Right lobe of liver (tissue), 6 donors: ENCODE measurements at regions of chr6 and their contacts with region 1.

Region 1: DNA sequence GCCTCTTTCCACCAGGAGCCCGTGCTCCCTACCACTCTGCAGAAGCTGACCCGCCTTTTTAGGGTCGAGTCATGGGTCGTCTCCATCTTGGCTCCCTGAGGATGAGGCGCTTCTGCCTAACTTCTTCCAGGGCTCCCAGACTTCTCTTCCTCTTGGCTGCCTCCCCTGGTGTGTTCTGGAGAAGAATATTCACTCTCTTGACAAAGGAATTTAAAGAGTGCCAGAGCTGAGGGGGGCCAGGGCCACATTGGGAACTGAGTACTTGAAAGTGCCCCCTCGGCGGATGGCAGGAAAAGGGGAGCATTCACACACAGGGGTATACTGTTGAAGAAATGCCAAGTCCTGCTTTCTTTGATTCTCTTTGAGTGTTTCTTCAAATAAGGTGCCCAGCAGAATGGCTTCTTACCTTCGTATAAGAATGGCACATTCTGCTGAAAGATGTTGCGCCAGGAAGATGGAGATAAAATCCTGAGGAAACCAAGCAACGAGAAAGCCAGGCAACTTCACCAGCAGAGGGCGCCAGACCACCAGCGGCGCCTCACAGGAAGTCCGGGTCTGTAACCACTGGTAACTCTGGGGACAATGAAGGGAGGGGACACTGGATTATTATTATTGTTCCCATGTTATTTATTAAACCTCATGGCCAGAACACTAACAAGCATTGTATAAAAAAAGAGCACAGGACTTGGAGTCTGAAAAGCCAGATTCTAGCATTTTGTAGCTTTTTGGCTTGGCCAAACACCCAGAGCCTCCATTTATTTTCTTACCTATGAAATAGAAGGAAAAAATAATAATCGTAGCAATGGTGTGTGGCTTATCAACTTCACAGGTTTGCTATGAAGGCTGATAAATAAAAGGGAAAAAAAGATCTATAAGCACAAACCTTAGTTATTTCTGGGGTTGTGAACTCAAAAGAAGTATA is 176.7 kb downstream of the HACE1 start:
- DNase-seq: peak; percentile 56 to 61 (median 59)
- ATAC-seq: peak; percentile 71 to 86 (median 80)
- H3K4me3 ChIP-seq: no peak overlapping the region
- H3K27ac ChIP-seq: no peak overlapping the region
- H3K4me1 ChIP-seq: no peaks in the 10 kb centered on the region
- H3K27me3 ChIP-seq: no peaks in the 10 kb centered on the region
- CTCF ChIP-seq: peak; percentile 55 to 88 (median 80)
- POLR2A ChIP-seq: no peak

Region 2: DNA sequence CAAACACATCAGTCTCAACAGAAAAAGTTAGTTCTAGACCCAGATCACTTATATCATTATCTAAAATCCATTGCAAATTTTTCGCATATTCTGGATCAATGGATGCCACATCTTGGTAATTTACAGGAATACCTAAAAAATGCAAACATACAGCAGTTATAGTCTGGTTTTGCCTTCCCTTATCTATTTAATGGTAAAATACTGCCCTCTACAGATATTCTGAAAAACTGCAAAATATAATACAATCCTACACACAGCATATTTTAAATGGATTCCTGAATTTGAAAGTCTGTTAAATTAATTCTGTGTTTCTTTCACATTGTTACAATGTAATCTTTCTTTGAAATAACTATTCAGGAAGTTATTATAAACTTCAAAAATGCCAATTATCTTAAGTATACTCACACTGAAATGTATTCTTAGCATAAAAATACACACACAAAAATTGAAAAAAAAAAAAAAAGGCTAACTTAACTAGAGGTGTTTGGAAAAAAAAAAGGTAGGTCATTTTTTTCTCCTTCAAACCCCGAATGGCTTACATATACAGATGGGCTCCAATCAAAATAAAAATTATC is 88.4 kb after region 1 on chr6:
- intact Hi-C with region 1: loop called in 1 of 2 experiments (anchors 10 kb)
- DNase-seq: no peak
- ATAC-seq: peak; percentile 64 to 83 (median 70)
- H3K4me3 ChIP-seq: no peak overlapping the region
- H3K27ac ChIP-seq: no peak overlapping the region
- H3K4me1 ChIP-seq: no peaks in the 10 kb centered on the region
- H3K27me3 ChIP-seq: no peaks in the 10 kb centered on the region
- CTCF ChIP-seq: peak; percentile 51 to 61 (median 55)
- POLR2A ChIP-seq: no peak